Activated naive CD4-positive, alpha-beta T cell treated with anti-CD3 and anti-CD28 coated beads for 36 hours (primary cell): ENCODE measurements at regions of chr16 and their contacts with region 1.

Region 1: DNA sequence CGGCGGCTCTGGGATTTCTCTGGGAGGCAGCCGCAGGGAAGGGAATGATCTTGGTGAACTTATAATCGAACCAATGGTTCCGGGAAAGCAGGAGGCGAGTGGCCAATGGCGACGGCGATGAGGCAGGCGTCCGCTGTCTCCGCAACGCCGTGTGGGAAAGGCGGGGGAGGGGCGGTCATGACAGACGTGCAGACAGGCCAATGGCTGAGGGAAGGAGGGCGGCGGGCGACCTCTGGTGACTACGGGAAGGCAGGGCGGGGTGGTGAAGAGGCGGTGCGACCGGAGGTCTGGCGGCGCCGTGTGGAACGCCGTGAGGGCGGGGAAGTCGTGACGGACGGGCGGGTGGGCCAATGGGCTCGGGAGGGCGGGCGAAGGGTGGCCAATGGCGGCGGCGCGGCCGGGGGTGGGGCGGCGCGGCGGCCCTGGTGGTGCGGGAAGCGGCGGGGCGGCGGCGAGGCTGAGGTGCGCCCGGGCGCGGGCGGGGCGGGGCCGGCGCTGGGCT is at the start of gene RAB40C:
- DNase-seq: peak; percentile 100
- H3K4me3 Mint-ChIP-seq: peak within 1 kb of the TSS; percentile 85
- H3K27ac Mint-ChIP-seq: peak within 1 kb of the TSS; percentile 96
- H3K4me1 Mint-ChIP-seq: peaks cover 29% of the 10 kb centered on the region
- H3K27me3 Mint-ChIP-seq: no peaks in the 10 kb centered on the region
- total RNA-seq, gene RAB40C: 6.3 to 7.3 TPM

Region 2: DNA sequence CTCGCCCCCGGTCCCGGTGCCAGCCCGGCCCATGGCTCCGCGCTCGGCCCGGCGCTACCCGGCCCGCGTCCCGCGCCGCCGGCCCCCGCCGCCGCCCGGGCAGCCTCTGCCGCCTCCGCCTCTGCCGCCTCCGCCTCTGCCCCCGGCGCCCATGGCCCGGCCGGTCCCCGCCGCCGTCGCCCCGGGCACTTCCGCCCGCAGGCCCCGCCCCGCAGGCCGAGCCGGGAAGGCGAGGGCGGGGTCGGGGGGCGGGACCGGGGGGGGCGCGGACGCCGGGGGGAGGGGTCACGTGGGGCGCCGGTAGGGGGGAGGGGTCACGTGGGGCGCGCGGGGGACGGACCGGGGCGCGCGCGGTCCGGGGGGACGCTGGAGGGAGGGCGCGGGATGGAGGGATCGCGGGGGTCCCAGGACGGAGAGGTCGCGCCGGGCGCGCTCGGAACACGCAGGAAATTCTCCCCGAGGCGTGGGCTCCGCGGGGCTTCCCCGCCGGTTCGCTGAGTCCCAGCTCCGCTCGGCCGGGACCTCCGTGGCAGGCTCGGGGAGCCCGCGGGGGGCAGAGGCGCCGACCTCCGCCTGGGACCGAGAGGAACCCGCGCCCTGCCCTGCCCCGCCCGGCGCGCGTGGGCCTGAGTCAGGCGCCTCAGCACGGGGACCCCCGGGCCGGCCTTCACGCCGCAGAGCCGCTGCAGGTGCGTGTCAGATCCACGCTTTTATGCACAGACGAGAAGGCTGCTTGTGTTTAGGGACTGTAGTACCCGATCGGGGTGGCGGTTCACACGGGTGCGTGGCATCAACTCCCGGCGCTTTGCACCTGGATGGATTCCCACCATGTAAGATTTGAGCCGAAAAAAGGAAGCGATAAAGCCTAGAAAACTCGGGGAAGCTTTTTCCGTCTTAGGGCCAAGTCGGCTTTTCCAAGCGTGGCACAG is 207.7 kb before region 1 on chr16 and contains the start of gene PGAP6:
- CTCF ChIA-PET with region 1: no interaction called
- intact Hi-C with region 1: loop called (anchors 5 kb)
- DNase-seq: peak; percentile 67
- H3K4me3 Mint-ChIP-seq: peak within 1 kb of the TSS; percentile 80
- H3K27ac Mint-ChIP-seq: peak within 1 kb of the TSS; percentile 66
- H3K4me1 Mint-ChIP-seq: peaks cover 25% of the 10 kb centered on the region
- H3K27me3 Mint-ChIP-seq: no peaks in the 10 kb centered on the region
- total RNA-seq, gene PGAP6: 19.9 to 20.9 TPM

Region 3: GRCh38 chr16:569445-570254 is 20.1 kb before region 1 on chr16 and contains the start of gene PIGQ:
- CTCF ChIA-PET with region 1: no interaction called
- intact Hi-C with region 1: loop called (anchors 1 kb)
- DNase-seq: peak; percentile 67
- H3K4me3 Mint-ChIP-seq: peak within 1 kb of the TSS; percentile 86
- H3K27ac Mint-ChIP-seq: peak within 1 kb of the TSS; percentile 90
- H3K4me1 Mint-ChIP-seq: peaks cover 29% of the 10 kb centered on the region
- H3K27me3 Mint-ChIP-seq: no peaks in the 10 kb centered on the region
- total RNA-seq, gene PIGQ: 18.6 to 19.2 TPM

Region 4: DNA sequence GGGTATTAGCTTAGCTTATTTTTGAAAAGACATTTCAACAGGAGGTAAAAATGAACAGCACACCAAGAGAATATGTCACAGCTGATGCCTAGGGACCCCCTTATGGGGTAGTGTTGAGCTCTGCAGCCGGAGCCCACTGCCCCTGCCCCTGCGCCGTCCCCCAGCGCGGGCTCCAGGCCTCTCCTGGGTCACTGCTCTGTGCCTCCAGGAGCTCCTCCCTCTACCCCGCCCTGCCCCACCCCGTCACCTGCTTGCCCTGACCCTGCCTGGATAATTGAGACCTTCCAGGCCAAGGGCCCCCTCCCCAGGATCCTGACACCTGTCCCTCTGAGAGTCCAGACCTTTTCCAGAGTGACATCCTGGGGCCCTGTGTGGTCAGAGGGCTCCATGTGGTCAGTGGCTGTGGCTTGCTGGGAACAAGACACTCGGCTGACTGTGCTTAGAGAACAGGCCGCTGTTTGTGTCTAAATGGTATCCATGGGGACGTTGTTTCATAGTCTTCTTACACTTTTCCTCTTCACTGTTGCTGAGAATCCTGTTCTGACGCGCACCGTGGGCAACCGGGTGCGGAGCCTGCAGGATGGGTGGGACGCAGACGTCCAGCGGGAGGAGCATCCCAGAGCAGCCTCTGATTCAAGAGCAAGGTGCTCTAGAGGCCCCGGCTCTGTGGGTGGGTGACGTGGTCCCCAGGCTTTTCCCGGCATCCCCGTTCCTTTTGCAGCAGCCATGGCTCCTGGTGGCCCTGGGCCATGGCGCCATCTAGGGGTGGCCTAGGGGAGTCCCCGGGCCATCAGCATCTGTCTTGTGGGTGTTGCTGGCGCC is 21.0 kb after region 1 on chr16:
- CTCF ChIA-PET with region 1: interaction called, 4 read pairs
- intact Hi-C with region 1: loop called (anchors 1 kb)
- DNase-seq: peak; percentile 66
- H3K4me3 Mint-ChIP-seq: no peak overlapping the region
- H3K27ac Mint-ChIP-seq: no peak overlapping the region
- H3K4me1 Mint-ChIP-seq: peaks cover 10% of the 10 kb centered on the region
- H3K27me3 Mint-ChIP-seq: no peaks in the 10 kb centered on the region

Region 5: DNA sequence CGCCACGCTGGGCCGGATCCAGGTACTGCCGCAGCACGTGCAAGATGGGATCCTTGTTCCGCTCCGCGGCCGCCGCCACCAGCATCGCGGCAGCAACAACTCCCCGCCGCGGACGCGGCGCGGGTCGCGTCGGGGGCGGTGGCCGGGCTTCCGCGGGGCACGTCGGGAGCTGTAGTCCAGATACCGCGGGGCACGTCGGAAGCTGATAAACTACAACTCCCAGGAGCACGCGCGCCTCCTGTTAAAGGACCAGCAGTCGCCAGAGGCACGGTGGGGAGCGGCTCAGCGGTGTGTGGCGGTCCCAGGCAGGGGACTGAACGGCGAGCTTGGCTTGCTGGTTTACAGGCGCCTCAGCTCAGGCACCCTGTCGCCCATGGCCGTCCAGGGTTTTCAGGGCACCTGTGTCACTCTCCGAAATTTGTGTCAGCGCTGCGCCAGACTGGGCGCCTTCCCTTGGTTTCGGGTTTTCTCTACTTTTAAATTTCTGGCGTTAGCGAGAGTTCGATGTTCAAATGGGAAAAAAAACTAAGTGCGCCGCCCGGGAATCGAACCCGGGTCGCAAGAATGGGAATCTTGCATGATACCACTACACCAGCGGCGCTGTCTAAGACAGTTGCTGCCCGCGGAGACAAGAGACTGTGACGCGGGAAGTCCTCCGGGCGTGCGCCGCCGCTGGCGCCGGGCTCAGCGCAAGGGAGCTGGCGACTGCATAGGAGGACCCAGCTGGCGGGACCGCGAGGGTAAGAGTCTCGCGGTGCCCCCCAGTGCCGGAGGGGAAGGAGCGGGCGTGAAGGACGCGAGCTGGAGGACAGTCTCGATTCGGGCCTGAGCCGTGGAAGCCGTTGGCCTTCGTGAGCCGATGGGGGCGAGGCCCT is 46.7 kb after region 1 on chr16 and contains the start of gene METTL26:
- CTCF ChIA-PET with region 1: no interaction called
- intact Hi-C with region 1: loop called (anchors 1 kb)
- DNase-seq: peak; percentile 95
- H3K4me3 Mint-ChIP-seq: peak within 1 kb of the TSS; percentile 90
- H3K27ac Mint-ChIP-seq: peak within 1 kb of the TSS; percentile 91
- H3K4me1 Mint-ChIP-seq: peaks cover 15% of the 10 kb centered on the region
- H3K27me3 Mint-ChIP-seq: no peaks in the 10 kb centered on the region
- total RNA-seq, gene METTL26: 121 to 122 TPM

Region 6: GRCh38 chr16:684067-684794 is 94.5 kb after region 1 on chr16 and contains the start of gene JMJD8:
- CTCF ChIA-PET with region 1: no interaction called
- intact Hi-C with region 1: loop called (anchors 1 kb)
- DNase-seq: peak; percentile 98
- H3K4me3 Mint-ChIP-seq: peak within 1 kb of the TSS; percentile 80
- H3K27ac Mint-ChIP-seq: peak within 1 kb of the TSS; percentile 46
- H3K4me1 Mint-ChIP-seq: peaks cover 42% of the 10 kb centered on the region
- H3K27me3 Mint-ChIP-seq: no peaks in the 10 kb centered on the region
- total RNA-seq, gene JMJD8: 18.2 to 20.5 TPM